Activated T-helper 2 cell treated with anti-CD3 and anti-CD28 coated beads, Interferon-gamma antibody, Interleukin-2, Interleukin-4, amounts not matched to agents 10 μg/mL and 5 μg/mL and 100 μg/mL, durations not matched to agents 14 hours and 24 hours and 36 hours (primary cell): ENCODE measurements at regions of chr1 and their contacts with region 1.

Region 1: DNA sequence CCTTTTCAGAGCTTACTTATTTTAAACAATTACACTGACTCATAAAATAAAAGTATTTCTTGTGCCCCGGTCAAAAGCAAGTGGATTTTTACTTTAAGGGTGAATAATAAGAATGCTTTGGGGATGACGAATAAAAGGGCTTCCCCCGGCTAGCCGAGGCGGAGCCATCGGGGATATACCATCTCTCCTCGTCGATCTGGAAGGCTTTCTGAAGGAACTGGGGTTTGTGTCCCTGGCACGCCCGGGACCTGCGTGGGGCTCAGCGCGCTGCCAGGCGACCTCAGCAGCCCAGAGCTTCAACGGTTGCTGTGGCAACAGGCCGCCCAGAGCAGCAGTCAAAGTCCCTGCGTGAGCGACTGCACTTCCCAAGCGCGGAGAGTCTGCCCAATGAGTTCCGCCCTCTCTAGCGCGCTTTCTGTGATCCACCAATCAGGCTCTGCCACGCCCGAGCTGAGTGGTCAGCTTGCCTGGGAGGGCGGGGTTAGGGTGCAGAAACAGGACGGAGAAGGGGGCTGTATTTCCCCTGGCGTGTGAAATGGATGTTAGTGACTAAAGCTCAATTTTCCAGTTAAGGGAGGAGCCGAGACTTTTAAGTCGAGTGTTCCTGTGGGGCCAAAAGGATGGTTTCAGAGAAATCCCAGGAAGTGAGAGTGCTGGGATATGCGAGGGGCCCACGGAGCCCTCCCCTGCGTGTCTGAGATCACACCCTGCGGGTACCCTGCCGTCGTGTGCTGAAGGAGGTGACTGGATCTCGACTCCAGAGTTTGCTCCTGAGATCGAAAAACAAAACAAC is 33.0 kb upstream of the MGST3 start:
- DNase-seq: peak; percentile 93
- H3K4me3 Mint-ChIP-seq: peak overlapping the region; percentile 90
- H3K27ac Mint-ChIP-seq: peak overlapping the region; percentile 86
- H3K4me1 Mint-ChIP-seq: peaks cover 32% of the 10 kb centered on the region
- H3K27me3 Mint-ChIP-seq: peaks cover 30% of the 10 kb centered on the region

Region 2: DNA sequence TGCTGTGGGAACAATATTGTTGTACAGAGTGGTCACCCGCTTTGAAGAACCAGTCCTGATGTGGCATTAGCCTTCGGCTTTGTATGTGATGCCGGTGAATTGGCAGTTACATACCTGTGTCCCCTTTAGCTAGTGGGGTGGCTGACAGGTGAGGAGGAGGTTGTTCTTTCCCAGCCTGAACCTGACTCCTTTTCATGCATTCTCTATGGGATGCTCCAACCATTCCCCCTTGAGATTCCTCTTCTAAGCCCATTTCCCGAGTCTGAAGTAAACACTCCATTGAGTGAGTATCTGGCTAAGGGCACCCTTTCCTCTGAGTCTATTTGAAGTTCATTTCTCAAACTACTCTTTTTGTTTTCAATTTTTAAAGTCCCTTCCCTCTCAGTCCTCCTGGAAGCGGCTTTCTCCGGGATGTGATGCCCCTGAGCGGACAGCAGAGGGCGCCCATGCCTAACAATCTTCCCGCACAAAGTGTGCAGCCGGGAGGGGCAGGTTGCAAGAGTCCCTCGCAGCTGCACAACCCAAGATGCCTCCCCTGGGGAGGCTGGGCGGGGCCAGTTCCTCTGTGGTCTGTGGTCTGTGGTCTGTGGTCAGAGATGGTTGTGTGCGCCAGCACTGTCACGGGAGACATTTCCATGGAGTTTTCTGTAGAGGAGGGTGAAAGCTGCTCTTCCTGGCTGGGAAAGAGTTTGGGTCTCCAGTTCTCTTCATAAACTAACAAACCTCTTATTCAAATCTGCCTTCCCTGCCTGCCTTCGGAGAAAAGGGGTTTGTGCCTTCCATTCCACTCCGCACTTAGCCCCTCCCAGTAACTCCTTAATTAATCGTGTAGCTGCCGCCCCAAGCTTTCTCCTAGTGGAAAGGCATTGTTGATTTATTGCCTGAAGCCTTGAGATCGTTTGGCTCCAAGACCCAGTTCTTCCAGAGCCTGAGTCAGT is 205.2 kb before region 1 on chr1:
- intact Hi-C with region 1: loop called (anchors 1 kb)
- DNase-seq: peak; percentile 90
- H3K4me3 Mint-ChIP-seq: peak overlapping the region; percentile 31
- H3K27ac Mint-ChIP-seq: peak overlapping the region; percentile 64
- H3K4me1 Mint-ChIP-seq: peaks cover 23% of the 10 kb centered on the region
- H3K27me3 Mint-ChIP-seq: peaks cover 74% of the 10 kb centered on the region

Region 3: DNA sequence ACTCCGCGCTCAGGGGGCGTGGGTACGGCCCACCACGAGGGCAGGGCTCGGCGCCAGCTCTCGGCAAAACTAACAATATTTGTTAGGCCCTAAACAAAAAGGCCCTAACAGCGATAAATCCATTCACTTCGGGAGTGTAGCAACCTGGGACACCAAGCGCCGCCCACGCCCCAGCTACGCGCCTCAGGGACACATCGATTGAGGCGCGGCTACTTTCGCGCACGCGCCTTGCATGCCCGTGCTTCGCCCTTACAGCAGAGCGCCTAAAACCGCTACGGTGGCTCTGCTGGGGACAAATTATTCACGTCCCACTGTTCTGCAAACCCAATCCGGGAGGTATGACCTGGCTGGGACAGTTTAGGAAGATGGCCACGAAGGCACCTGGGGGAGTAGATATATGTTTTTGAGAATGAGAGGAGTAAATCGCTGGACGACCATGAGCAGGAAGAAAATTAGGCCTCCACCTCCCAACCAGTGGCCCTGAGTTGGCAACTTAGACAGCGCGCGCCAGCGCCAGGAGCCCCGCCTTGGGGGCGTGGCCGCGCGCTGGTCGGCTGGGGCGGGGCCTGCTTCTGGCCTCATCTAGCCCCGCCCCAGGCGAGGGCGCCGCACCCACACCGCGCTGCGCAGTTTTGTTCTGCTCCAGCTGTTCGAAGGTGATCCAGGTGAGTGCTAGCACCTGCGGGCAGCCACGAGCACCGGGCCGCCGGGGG is 32.7 kb after region 1 on chr1 and contains the start of gene MGST3:
- intact Hi-C with region 1: loop called (anchors 1 kb)
- DNase-seq: peak; percentile 93
- H3K4me3 Mint-ChIP-seq: no peak within 1 kb of the TSS
- H3K27ac Mint-ChIP-seq: peak within 1 kb of the TSS; percentile 52
- H3K4me1 Mint-ChIP-seq: peaks cover 23% of the 10 kb centered on the region
- H3K27me3 Mint-ChIP-seq: peaks cover 6% of the 10 kb centered on the region
- total RNA-seq, gene MGST3: 63.6 and 63.7 TPM in 2 replicates

Region 4: DNA sequence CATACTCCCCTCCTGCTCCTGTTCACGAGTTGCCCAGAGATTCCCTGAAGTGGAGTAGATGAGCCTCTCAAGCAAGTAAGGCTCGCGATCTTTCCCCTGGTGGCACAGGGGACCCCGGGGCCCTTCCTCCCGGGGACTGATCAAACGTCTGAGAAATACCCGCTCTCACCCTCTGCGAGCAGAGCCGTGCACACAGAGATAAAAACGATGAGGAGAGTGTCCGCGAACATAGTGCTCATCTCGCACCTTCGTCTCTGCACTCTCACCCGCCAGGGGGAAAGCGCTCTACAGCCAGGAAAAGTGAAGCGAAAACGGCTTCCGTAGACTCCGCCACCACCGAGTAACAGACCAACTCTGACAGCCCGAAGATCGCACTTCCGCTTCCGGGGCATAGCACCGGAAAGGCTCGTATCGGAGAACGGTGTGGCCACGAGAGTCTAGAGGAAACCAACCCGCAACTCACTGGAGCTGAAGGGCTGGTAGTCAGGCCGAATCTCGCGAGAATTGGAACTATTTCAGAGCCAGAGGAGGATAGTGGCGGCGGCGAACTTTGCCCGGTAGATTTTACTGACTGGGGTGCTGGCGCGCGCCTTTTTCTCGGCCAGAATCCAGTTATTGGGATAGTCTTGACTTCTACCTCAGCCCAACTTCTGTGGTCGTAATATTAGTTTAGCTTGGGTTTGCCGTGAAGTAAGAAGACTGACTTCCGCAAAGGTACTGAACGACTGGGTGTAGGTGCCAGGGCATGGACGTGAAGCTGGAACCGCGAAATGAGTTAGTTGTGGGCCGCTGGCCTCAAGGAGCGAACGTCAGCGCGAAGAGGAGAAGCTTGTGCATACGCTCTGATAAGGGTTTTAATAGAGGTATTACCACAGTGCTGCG is 170.7 kb after region 1 on chr1 and contains the start of gene TMCO1:
- intact Hi-C with region 1: loop called (anchors 1 kb)
- DNase-seq: peak; percentile 95
- H3K4me3 Mint-ChIP-seq: peak within 1 kb of the TSS; percentile 94
- H3K27ac Mint-ChIP-seq: peak within 1 kb of the TSS; percentile 96
- H3K4me1 Mint-ChIP-seq: peaks cover 38% of the 10 kb centered on the region
- H3K27me3 Mint-ChIP-seq: no peaks in the 10 kb centered on the region
- total RNA-seq, gene TMCO1: 83.3 and 85.8 TPM in 2 replicates

Region 5: DNA sequence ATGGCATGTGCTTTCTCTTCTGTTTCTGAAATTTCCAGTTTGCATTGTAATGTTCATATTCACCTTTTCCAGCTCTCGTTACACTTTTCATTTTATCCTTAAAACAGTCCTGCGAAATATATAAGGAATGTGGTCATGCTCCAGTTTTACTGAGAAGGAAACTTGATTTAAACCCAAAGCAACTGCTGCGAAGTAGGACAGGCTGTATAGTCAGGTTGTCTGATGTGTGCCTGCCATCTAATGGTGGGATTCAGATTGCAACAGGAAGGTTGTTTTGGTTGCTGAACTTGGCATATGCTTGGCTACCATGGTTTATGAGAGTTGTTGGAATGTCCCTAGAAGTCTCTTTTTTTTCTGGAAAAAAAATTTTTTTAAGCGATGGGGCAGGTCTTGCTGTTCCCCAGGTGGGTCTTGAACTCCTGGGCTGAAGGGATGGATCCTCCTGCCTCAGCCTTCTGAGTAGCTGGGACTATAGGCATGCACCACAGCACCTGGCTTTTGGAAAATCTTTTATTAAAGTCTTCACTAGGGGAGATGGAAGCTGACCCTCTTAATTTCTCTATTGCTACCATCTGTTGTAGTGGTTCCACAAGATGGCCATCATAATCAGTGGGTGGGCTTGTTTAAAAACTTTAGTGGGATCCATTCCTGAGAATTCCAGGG is 316.2 kb after region 1 on chr1:
- intact Hi-C with region 1: loop called (anchors 1 kb)
- DNase-seq: peak; percentile 56
- H3K4me3 Mint-ChIP-seq: no peak overlapping the region
- H3K27ac Mint-ChIP-seq: no peak overlapping the region
- H3K4me1 Mint-ChIP-seq: peaks cover 5% of the 10 kb centered on the region
- H3K27me3 Mint-ChIP-seq: no peaks in the 10 kb centered on the region